HAP-1 (cell line): ENCODE measurements at regions of chr22 and their contacts with region 1.

Region 1: GRCh38 chr22:27804470-27805297 is 3.1 kb upstream of the MN1 start:
- DNase-seq: peak; percentile 40 to 84
- H3K4me3 ChIP-seq: no peak overlapping the region
- H3K4me1 ChIP-seq: peaks cover 4% of the 10 kb centered on the region
- H3K27me3 ChIP-seq: no peaks in the 10 kb centered on the region

Region 2: DNA sequence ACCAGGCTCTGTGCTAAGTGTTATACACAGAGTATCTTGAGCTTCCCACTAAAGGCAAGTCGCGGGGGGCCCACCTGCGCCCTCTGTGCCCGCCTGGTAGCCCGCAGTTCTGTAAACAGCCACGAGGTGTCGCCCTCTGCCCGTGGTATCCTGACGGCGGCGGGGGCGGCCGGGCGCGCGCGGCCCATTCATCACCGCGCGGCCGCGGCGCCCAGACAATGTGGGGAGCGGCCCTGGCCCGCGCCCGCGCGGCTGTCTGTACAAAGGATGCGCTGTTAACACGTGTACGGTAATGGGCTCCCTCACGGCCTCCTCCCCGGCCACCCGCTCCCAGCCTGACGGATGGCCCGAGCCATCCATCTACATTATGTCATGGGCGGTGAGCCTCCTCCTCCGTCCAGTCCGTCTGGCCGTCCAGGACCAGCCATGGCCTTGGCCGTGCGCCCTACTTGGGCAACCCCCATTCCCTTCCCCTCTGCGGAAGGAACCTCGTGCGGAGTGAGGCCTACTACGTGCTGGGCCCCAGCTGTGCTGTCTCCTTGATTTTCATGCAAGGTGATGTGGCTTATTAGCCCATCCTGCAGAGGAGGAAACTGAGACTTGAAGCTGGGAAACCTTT is 1047.9 kb before region 1 on chr22:
- in situ Hi-C with region 1: loop called (anchors 10 kb)
- DNase-seq: peak; percentile 51 to 88
- H3K4me3 ChIP-seq: peak overlapping the region; percentile 11
- H3K4me1 ChIP-seq: peaks cover 4% of the 10 kb centered on the region
- H3K27me3 ChIP-seq: no peaks in the 10 kb centered on the region

Region 3: GRCh38 chr22:27405672-27406388 is 398.9 kb before region 1 on chr22:
- in situ Hi-C with region 1: loop called (anchors 5 kb)
- DNase-seq: peak; percentile 32 to 82
- H3K4me3 ChIP-seq: no peak overlapping the region
- H3K4me1 ChIP-seq: no peaks in the 10 kb centered on the region
- H3K27me3 ChIP-seq: peaks cover 2% of the 10 kb centered on the region; the same call in 1 of the 2 replicates

Region 4: DNA sequence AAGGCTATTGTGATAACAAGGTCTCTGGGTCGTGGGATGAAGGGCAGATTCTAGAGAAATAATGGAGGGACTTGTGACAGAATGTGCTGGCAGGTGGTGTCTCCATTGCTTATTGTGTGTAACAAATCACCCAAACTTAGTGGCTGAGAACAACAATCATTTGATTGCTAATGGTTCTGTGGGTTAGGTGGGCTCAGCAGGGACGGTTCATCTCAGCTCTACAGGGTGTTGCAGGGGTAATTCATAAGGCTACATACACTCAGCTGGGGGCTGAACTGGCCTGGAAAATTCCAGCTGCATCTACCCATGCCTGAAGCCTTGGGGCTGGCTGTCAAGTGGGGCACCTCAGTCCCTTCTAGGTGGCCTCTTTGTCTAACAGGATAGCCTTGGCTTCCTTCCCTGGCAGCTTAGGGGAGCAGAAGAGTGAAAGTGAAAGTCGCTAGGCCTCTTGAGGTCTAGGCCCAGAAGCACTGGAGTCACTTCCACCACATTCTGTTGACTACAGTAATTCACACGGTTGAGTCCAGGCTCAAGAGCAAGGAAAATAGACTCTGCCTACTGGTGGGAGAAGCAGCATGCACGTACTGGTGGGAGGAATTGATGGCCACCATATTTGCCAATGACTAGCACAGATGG is 312.0 kb before region 1 on chr22:
- in situ Hi-C with region 1: no loop called
- DNase-seq: no peak
- H3K4me3 ChIP-seq: no peak overlapping the region
- H3K4me1 ChIP-seq: no peaks in the 10 kb centered on the region
- H3K27me3 ChIP-seq: no peaks in the 10 kb centered on the region

Region 5: GRCh38 chr22:28514321-28514821 is 709.7 kb after region 1 on chr22:
- in situ Hi-C with region 1: no loop called
- DNase-seq: no peak
- H3K4me3 ChIP-seq: no peak overlapping the region
- H3K4me1 ChIP-seq: peaks cover 3% of the 10 kb centered on the region; the same call in 1 of the 2 replicates
- H3K27me3 ChIP-seq: no peaks in the 10 kb centered on the region